PC-3 (cell line): ENCODE measurements at regions of chrX and their contacts with region 1.

Region 1: DNA sequence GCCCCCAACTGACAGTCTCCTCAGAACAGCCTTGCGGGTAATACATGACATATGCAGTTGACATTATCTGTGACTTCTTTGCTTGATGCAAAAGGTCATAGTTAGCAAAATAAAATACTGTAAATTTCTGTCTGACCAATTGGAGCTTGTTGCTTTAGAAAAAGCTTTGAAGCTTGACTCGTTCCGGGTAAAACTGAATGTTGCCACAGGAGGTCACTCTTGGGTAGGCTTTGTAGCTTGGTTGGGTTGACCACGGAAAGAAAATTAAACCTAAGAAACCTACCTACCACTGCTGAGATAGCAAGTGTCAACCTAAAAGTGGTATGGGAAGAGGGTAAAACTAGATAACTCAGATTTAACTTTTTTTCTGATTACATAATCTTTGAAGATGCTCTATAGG is 23.2 kb downstream of the PRPS2 start:
- DNase-seq: peak; percentile 79
- ATAC-seq: peak; percentile 66
- H3K4me3 ChIP-seq: no peak overlapping the region
- H3K27ac ChIP-seq: no peak overlapping the region
- H3K4me1 ChIP-seq: no peaks in the 10 kb centered on the region
- H3K27me3 ChIP-seq: no peaks in the 10 kb centered on the region
- CTCF ChIP-seq: peak; percentile 72

Region 2: DNA sequence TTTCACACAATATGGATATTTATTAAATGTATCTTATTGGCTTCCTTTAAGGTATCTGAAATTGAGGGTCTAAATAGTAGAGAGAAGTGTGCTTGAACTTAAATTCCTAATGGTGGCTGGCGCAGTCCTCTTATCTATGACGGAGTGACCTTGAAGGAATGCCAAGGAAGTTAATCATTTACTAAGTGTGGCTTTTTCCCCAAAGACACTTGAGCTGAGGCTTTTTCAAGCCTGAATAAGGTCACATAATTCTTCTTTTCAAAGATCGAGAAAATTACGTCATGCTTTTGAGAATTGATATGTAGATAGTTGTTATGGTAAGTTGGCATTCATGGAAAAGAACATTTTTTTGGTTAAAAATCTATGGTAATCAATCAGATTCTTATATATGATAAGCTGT is 34.9 kb before region 1 on chrX:
- CTCF ChIA-PET with region 1: no interaction called
- POLR2A ChIA-PET with region 1: no interaction called
- intact Hi-C with region 1: no loop called
- DNase-seq: no peak
- ATAC-seq: no peak
- H3K4me3 ChIP-seq: no peak overlapping the region
- H3K27ac ChIP-seq: no peak overlapping the region
- H3K4me1 ChIP-seq: no peaks in the 10 kb centered on the region
- H3K27me3 ChIP-seq: no peaks in the 10 kb centered on the region
- CTCF ChIP-seq: no peak

Region 3: GRCh38 chrX:12894074-12895030 is 79.9 kb after region 1 on chrX:
- CTCF ChIA-PET with region 1: interaction called, 7 read pairs
- POLR2A ChIA-PET with region 1: no interaction called
- intact Hi-C with region 1: loop called (anchors 1 kb)
- DNase-seq: peak; percentile 55
- ATAC-seq: peak; percentile 58
- H3K4me3 ChIP-seq: no peak overlapping the region
- H3K27ac ChIP-seq: no peak overlapping the region
- H3K4me1 ChIP-seq: no peaks in the 10 kb centered on the region
- H3K27me3 ChIP-seq: no peaks in the 10 kb centered on the region
- CTCF ChIP-seq: peak; percentile 84

Region 4: DNA sequence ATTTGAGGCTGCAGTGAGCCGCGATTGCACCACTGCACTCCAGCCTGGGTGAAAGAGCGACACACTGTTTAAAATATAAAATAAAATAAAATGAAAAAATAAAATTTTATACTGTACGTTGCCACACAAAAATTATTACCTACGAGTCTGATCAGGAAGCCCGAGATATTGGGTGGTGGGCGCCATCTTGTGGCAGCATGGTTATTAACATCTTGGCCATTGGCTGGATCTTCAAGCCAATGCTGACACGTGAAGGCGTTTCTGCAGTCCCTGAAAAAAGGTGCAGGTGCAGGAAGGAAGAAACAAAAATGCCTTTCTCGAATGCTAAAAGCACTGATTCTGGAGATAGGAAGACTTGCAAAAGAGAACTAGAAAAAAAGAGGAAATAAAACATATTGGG is 87.1 kb after region 1 on chrX:
- CTCF ChIA-PET with region 1: interaction called, 7 read pairs
- POLR2A ChIA-PET with region 1: no interaction called
- intact Hi-C with region 1: loop called (anchors 1 kb)
- DNase-seq: peak; percentile 79
- ATAC-seq: peak; percentile 68
- H3K4me3 ChIP-seq: no peak overlapping the region
- H3K27ac ChIP-seq: no peak overlapping the region
- H3K4me1 ChIP-seq: no peaks in the 10 kb centered on the region
- H3K27me3 ChIP-seq: no peaks in the 10 kb centered on the region
- CTCF ChIP-seq: peak; percentile 60

Region 5: DNA sequence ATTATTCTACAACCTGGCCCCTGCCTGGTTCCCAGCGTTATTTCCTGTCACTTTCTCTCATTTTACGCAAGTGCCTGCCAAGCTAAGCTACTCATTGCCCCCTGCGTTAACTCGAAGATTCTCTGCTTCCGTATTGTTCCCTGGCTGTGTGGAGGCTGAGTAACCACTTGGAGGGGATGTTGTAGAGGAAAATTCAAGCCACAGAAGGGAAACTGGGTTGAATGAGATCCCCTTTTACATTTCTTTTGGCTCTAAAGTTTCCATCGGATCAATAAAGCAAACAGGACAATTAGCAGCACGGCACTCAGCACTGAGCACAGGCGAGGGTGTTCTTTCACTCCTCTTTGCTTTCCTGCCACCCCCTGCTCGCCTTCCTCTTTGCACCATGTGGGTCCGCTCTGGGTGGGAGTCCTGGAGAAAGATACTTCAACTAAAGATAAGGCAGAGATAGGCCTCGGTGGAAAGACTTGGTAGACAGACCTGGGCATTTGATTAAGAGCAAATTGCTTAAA is 156.3 kb after region 1 on chrX:
- CTCF ChIA-PET with region 1: no interaction called
- POLR2A ChIA-PET with region 1: no interaction called
- intact Hi-C with region 1: no loop called
- DNase-seq: peak; percentile 39
- ATAC-seq: no peak
- H3K4me3 ChIP-seq: no peak overlapping the region
- H3K27ac ChIP-seq: no peak overlapping the region
- H3K4me1 ChIP-seq: peaks cover 12% of the 10 kb centered on the region; the same call in 1 of the 2 replicates
- H3K27me3 ChIP-seq: no peaks in the 10 kb centered on the region
- CTCF ChIP-seq: peak; percentile 46; the same call in 1 of the 2 replicates

Region 6: GRCh38 chrX:13013363-13014110 is 199.1 kb after region 1 on chrX:
- CTCF ChIA-PET with region 1: no interaction called
- POLR2A ChIA-PET with region 1: no interaction called
- intact Hi-C with region 1: no loop called
- DNase-seq: no peak
- ATAC-seq: 0 out of 2 replicates have a peak, but pooled peaks have one; percentile 29
- H3K4me3 ChIP-seq: no peak overlapping the region
- H3K27ac ChIP-seq: no peak overlapping the region
- H3K4me1 ChIP-seq: peaks cover 37% of the 10 kb centered on the region
- H3K27me3 ChIP-seq: no peaks in the 10 kb centered on the region
- CTCF ChIP-seq: no peak